A673 (cell line): ENCODE measurements at regions of chr11 and their contacts with region 1.

Region 1: DNA sequence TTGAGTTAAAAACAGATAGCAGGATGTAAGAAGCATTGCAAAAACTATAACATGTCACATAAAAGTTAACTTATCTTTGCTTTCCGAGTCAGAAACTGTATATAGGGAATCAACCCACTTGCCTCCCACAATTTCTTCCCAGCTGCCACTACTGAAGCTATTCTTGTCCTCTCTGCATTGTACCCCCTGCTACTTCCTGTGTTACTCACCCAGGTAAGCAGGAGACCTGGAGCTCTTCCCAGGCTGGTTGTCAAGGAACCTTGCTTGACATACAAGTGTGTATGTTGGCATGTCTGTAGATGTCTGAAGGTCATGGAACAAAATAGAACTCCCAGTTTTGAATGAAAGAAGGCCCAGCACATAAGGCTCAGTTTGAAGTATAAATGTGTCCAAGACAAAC is 74.3 kb upstream of the LRRC4C start:
- DNase-seq: no peak
- H3K4me3 ChIP-seq: no peak overlapping the region
- H3K27ac ChIP-seq: no peak overlapping the region
- H3K4me1 ChIP-seq: no peaks in the 10 kb centered on the region
- H3K27me3 ChIP-seq: no peaks in the 10 kb centered on the region
- CTCF ChIP-seq: no peak

Region 2: GRCh38 chr11:41400819-41401382 is 132.9 kb before region 1 on chr11:
- CTCF ChIA-PET with region 1: no interaction called
- POLR2A ChIA-PET with region 1: no interaction called
- intact Hi-C with region 1: no loop called
- DNase-seq: no peak
- H3K4me3 ChIP-seq: no peak overlapping the region
- H3K27ac ChIP-seq: no peak overlapping the region
- H3K4me1 ChIP-seq: no peaks in the 10 kb centered on the region
- H3K27me3 ChIP-seq: no peaks in the 10 kb centered on the region
- CTCF ChIP-seq: no peak

Region 3: GRCh38 chr11:41479179-41479578 is 54.6 kb before region 1 on chr11:
- CTCF ChIA-PET with region 1: no interaction called
- POLR2A ChIA-PET with region 1: no interaction called
- intact Hi-C with region 1: loop called (anchors 10 kb)
- DNase-seq: no peak
- H3K4me3 ChIP-seq: no peak overlapping the region
- H3K27ac ChIP-seq: no peak overlapping the region
- H3K4me1 ChIP-seq: no peaks in the 10 kb centered on the region
- H3K27me3 ChIP-seq: no peaks in the 10 kb centered on the region
- CTCF ChIP-seq: no peak

Region 4: DNA sequence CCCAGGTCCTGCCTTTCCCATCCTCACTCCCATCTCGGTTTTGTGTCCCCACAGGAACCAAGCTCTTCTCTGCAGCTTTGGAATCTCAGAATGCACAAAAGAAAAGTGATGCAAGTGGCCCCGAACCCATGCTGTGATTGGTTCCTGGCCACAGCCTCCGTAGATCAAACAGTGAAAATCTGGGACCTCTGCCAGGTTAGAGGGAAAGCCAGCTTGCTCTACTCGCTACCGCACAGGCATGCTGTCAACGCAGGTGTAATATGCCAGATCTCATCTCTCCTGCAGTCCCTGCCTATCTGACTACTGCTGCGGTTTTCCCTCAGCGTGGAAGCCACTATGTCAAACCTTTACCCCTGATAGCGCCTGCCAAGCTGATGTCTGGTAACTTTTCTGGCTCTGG is 126.2 kb after region 1 on chr11:
- CTCF ChIA-PET with region 1: no interaction called
- POLR2A ChIA-PET with region 1: interaction called, 16 read pairs
- intact Hi-C with region 1: no loop called
- DNase-seq: peak; percentile 41
- H3K4me3 ChIP-seq: no peak overlapping the region
- H3K27ac ChIP-seq: no peak overlapping the region
- H3K4me1 ChIP-seq: no peaks in the 10 kb centered on the region
- H3K27me3 ChIP-seq: no peaks in the 10 kb centered on the region
- CTCF ChIP-seq: no peak